GM10248 (cell line): ENCODE measurements at regions of chr5 and their contacts with region 1.

Region 1: DNA sequence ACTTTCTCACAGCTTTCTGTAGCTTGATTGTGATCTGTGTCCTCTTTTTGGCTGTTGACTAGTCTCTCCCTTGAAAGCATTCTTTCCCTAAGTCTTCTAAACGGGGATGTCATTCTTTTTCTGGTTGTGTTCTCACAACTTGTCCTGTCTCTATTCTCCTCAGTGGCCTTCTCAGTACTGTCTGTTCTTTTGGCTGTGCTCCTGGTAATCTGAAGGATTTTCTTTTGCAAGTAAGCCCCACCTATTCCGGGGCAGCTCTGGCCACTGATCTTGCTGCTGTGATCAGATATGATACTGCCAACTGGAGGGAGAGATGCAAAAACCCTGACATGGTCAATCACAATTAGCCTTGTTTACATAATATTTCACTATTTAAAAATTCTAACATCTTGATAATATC is 172.2 kb downstream of the CDC42SE2 start:
- DNase-seq: no peak
- CTCF ChIP-seq: no peak

Region 2: DNA sequence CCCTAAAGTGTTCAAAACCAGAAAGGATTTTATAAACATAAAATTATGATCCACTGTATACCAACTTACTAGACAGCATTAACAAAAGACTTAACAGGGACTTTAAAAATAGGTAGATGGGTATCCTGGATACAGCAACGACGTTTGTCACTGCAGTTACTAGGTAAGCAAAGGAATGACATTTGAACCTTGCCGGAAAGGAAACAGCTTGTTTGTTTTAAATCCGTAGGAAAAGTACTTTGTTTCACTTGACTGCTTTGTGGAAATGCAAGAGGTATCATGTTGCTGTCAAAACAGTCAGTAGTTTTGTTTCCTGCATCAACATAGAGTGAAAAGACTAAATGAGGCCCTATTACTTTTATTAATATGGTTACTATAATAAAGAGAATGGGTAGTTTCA is 49.3 kb before region 1 on chr5:
- CTCF ChIA-PET with region 1: no interaction called
- POLR2A ChIA-PET with region 1: no interaction called
- DNase-seq: no peak
- CTCF ChIP-seq: no peak

Region 3: DNA sequence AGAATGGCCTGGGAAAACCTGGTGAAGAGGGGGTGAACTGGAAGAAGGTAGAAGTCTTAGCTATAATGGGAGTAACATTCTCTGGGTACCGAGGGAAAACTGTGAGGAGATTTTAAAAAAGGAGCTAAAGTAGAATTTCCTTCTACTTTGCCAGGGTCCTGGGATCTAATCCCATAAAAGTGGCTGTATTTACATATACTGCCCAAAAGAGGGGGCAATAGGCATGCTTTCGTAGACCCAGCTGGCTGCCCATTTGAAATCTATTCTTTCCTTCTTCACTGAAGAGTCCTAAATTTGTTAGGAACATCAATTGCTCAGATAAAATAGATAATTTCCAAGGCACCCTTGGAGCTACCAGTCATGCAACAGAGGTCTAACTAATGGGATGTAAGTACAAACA is 13.0 kb before region 1 on chr5:
- CTCF ChIA-PET with region 1: interaction called, 27 read pairs
- POLR2A ChIA-PET with region 1: no interaction called
- DNase-seq: no peak
- CTCF ChIP-seq: peak; percentile 42

Region 4: GRCh38 chr5:131453826-131454225 is 17.7 kb after region 1 on chr5:
- CTCF ChIA-PET with region 1: interaction called, 13 read pairs
- POLR2A ChIA-PET with region 1: no interaction called
- DNase-seq: no peak
- CTCF ChIP-seq: no peak

Region 5: DNA sequence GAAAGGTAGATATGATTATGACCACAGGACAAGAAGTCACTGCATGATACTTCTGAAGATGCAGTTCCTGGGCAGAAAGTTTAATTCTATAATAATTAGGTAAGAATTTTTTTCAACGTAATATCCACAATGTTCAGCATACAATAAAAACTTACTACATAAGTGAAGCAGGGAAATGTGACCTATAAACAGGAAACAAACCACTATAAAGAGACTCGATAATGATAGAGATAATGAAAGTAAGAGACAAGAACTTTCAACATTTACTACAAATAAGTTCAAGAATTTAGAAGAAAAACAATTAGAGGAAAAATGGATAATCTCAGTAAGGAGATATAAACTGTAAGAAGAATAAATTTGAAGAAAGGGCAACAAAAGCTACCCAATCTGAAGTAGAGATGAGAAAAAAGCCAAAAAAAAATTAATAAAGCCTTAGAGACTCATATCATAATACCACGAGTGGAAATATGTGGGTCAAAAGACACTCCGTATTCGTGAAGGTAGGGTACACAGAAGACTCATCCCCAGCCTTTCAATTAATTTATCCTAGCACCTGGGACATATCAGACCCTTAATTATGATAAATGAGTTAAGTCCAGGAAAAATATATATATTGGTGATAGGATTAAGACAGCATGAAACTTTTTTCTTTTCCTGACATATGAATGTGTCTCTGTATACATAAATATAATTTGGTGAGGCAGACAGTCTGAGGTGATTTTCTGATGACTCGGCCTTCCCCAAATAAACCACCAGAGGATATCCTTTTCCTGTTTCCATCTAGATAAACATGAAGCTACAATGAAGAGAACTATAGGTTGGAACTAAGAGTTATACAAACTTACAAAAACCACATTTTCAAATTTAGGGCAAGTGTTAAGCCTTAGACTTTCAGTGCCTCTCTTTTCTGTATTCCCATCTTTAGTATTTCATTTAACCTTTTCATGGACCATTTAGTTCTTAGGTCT is 78.5 kb after region 1 on chr5:
- CTCF ChIA-PET with region 1: no interaction called
- POLR2A ChIA-PET with region 1: no interaction called
- DNase-seq: peak; percentile 17
- CTCF ChIP-seq: no peak

Region 6: GRCh38 chr5:131607418-131607817 is 171.3 kb after region 1 on chr5:
- CTCF ChIA-PET with region 1: no interaction called
- POLR2A ChIA-PET with region 1: no interaction called
- DNase-seq: no peak
- CTCF ChIP-seq: no peak